ENCODE measurements at regions of chr2 and their contacts with region 1.

Region 1: GRCh38 chr2:222318026-222318711 is 19.4 kb upstream of the PAX3 start:
- DNase-seq: peak; percentile 52
- ATAC-seq: peak; percentile 74
- H3K4me3 Mint-ChIP-seq: peak overlapping the region; percentile 69
- H3K27ac Mint-ChIP-seq: no peak overlapping the region
- H3K4me1 Mint-ChIP-seq: peaks cover 9% of the 10 kb centered on the region
- H3K27me3 Mint-ChIP-seq: peaks cover 51% of the 10 kb centered on the region

Region 2: GRCh38 chr2:222218786-222219185 is 99.4 kb before region 1 on chr2:
- CTCF ChIA-PET with region 1: no interaction called
- POLR2A ChIA-PET with region 1: no interaction called
- DNase-seq: no peak
- ATAC-seq: no peak
- H3K4me3 Mint-ChIP-seq: no peak overlapping the region
- H3K27ac Mint-ChIP-seq: no peak overlapping the region
- H3K4me1 Mint-ChIP-seq: no peaks in the 10 kb centered on the region
- H3K27me3 Mint-ChIP-seq: no peaks in the 10 kb centered on the region

Region 3: DNA sequence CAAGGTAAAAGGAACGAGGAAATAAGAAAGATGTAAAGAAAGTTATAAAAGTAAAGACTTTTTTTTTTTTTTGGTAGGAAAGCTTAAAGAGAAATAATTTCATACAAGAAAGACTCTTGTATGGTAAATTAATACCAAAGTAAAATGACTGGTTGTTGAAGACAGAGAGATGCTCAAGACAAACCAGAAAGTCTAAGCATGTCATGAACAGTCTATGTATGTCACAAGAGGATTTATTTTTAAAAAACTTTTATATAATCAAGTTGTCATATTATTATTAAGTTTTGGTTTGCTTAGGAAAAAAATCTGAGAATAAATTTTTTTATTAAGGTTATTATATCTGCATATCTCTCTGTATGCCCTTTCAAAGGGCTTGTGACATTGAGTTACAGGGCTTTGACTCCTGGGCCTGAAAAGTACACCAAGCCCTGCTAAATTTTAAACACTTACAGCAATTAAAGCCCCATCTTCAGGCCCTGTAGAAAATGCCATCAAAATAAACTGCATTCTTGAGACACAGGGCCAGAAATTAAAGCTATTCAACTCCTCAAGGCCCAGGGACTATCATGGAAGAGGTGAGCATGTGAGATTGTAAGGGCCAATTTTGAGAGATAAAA is 95.2 kb after region 1 on chr2:
- CTCF ChIA-PET with region 1: no interaction called
- POLR2A ChIA-PET with region 1: no interaction called
- DNase-seq: no peak
- ATAC-seq: no peak
- H3K4me3 Mint-ChIP-seq: no peak overlapping the region
- H3K27ac Mint-ChIP-seq: no peak overlapping the region
- H3K4me1 Mint-ChIP-seq: no peaks in the 10 kb centered on the region
- H3K27me3 Mint-ChIP-seq: no peaks in the 10 kb centered on the region

Region 4: DNA sequence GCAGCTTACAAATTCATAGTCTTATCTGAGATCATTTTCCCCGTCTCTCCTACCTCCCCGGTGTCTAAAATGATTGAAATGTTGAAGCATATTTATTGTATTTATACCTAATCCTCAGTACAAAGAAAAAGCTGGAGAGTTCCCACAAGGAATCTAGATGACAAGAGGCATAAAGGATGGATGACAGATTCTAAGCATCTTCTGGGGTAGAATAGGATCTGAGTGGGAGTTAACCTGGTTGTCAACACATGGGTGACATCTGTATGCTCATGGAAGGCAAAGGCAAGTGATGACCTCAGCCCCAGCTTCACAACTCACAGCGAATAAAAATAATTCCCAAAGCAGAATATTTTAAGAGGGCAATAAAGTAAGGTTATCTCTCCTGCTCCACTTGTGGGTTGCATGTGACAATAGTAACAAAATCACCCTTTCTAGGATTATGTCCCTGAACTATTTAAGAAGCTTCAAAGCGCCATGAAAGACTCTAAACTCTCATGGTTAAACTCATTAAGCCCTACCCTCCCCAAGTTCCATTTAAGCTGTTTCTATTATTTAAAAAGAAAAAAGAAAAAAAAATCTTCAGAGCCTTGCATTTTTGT is 138.4 kb after region 1 on chr2:
- CTCF ChIA-PET with region 1: no interaction called
- POLR2A ChIA-PET with region 1: no interaction called
- DNase-seq: no peak
- ATAC-seq: no peak
- H3K4me3 Mint-ChIP-seq: no peak overlapping the region
- H3K27ac Mint-ChIP-seq: no peak overlapping the region
- H3K4me1 Mint-ChIP-seq: no peaks in the 10 kb centered on the region
- H3K27me3 Mint-ChIP-seq: no peaks in the 10 kb centered on the region

Region 5: DNA sequence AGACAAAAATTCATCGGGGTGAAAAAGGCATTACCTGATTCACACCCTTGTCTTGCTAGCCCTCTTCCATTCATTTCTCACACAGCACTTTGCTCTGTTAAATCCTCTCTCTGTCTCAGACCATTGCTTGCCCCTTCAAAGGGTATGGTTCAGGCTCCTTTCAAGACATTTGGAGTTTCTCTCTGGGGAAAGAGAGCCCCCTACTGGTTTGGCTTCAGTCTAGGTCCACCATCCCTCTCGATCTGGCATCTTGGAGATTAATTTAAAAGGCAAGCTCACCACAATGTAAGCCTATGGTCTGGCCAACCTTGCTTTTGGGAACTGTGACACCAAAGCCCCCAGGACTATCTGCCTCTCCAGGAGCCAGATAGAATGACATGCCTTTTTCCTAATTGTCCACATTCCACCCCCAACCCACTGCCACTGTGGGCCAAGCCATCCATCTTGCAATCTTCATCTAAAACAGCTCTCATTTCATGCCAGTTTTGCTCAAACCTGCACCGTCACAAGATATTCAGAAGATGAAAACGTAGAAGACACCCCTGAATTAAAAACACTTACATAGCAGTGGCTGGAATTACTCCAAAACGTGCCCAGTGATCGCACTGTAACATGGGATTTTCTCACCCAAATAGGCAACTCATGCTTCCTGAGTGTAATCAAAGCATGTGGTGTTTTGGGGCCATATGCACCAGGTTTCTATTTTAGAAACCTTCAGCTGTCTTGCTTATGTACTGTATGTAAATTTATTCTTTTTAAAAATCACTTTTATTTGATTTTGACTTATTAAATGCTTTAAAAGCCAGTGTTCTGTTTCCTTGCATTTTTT is 243.9 kb after region 1 on chr2:
- CTCF ChIA-PET with region 1: interaction called, 32 read pairs
- POLR2A ChIA-PET with region 1: no interaction called
- DNase-seq: peak; percentile 47
- ATAC-seq: peak; percentile 63
- H3K4me3 Mint-ChIP-seq: no peak overlapping the region
- H3K27ac Mint-ChIP-seq: no peak overlapping the region
- H3K4me1 Mint-ChIP-seq: no peaks in the 10 kb centered on the region
- H3K27me3 Mint-ChIP-seq: no peaks in the 10 kb centered on the region

Region 6: DNA sequence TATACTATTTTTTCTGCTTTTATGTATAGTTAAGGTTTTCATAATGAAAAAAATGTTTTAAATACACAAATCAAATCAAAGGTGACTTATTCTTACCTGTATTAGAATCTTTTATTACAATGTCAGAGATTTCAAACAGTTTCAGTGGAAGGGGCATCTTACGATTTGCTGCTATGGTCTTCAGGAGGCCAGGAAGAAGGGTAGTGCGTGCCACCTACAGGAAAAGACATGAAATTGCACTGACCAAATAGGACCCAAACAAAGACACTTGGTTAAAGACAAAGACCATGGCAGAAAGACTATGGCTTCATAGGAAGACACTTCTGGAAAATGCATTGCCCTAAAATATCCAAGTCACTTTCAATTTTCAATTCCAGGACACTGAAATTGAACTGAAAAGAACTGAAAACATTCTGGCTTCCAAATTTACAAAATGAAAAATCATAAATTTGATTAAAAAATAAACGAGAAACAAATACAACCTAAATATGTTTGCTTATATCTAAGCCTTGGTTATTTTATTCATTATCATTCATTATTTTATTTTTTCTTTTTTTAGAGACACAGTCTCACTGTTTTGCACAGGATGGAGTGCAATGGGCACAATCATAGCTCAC is 295.7 kb after region 1 on chr2:
- CTCF ChIA-PET with region 1: interaction called, 15 read pairs
- POLR2A ChIA-PET with region 1: no interaction called
- DNase-seq: peak; percentile 24
- ATAC-seq: peak; percentile 71
- H3K4me3 Mint-ChIP-seq: no peak overlapping the region
- H3K27ac Mint-ChIP-seq: no peak overlapping the region
- H3K4me1 Mint-ChIP-seq: no peaks in the 10 kb centered on the region
- H3K27me3 Mint-ChIP-seq: no peaks in the 10 kb centered on the region

Measured in activated CD8-positive, alpha-beta T cell treated with anti-CD3 and anti-CD28 coated beads, Interleukin-2, amount 10 ng/mL, durations not matched to agents 7 days and 5 days (primary cell).